ENCODE measurements at regions of chr17 and their contacts with region 1.

Region 1: GRCh38 chr17:51260125-51260880 is at the start of gene UTP18:
- DNase-seq: peak; percentile 98 to 99
- H3K4me3 ChIP-seq: peak within 1 kb of the TSS; percentile 87
- H3K4me3 Mint-ChIP-seq: peak within 1 kb of the TSS; percentile 66
- H3K27ac Mint-ChIP-seq: peak within 1 kb of the TSS; percentile 97
- H3K4me1 ChIP-seq: peaks cover 5% of the 10 kb centered on the region; the same call in 1 of the 2 replicates
- H3K4me1 Mint-ChIP-seq: peaks cover 29% of the 10 kb centered on the region
- H3K27me3 ChIP-seq: no peaks in the 10 kb centered on the region
- H3K27me3 Mint-ChIP-seq: no peaks in the 10 kb centered on the region
- CTCF ChIP-seq: no peak
- total RNA-seq, gene UTP18: 55.3 and 63.4 TPM in 2 replicates

Region 2: DNA sequence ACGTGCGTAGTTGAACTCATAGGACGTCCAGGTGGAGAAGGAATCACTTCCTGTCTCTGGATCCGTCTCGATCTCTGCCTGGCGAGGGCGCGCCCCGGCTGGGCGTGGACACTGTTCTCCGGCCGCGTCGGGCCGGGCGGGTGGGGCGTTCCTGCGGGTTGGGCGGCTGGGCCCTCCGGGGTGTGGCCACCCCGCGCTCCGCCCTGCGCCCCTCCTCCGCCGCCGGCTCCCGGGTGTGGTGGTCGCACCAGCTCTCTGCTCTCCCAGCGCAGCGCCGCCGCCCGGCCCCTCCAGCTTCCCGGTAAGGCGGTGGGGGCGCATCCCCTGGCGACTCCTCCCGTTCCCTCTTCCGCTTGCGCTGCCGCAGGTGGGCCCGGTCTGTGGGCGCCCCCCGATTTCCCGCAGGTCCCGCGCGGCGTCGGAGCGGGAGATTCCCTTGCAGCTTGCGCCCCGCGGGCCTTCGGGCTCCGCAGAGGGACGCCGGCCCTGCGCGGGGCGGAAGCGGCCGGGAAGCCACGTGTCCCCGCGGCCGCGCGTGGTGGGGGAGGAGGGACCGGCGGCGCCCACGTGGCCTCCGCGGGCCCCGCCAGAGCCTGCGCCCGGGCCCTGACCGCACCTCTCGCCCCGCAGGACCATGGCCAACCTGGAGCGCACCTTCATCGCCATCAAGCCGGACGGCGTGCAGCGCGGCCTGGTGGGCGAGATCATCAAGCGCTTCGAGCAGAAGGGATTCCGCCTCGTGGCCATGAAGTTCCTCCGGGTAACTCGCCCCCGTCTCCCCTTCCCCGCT is 93.9 kb before region 1 on chr17 and contains the start of gene NME2:
- CTCF ChIA-PET with region 1: interaction called, 5 read pairs
- POLR2A ChIA-PET with region 1: no interaction called
- intact Hi-C with region 1: loop called (anchors 2 kb)
- DNase-seq: peak; percentile 94 to 96
- H3K4me3 ChIP-seq: peak within 1 kb of the TSS; percentile 91
- H3K4me3 Mint-ChIP-seq: peak within 1 kb of the TSS; percentile 98
- H3K27ac Mint-ChIP-seq: peak within 1 kb of the TSS; percentile 97
- H3K4me1 ChIP-seq: peaks cover 21% of the 10 kb centered on the region
- H3K4me1 Mint-ChIP-seq: peaks cover 10% of the 10 kb centered on the region
- H3K27me3 ChIP-seq: no peaks in the 10 kb centered on the region
- H3K27me3 Mint-ChIP-seq: no peaks in the 10 kb centered on the region
- CTCF ChIP-seq: peak in 1 of 2 experiments; percentile 2
- total RNA-seq, gene NME2: 734 and 821 TPM in 2 replicates

Region 3: DNA sequence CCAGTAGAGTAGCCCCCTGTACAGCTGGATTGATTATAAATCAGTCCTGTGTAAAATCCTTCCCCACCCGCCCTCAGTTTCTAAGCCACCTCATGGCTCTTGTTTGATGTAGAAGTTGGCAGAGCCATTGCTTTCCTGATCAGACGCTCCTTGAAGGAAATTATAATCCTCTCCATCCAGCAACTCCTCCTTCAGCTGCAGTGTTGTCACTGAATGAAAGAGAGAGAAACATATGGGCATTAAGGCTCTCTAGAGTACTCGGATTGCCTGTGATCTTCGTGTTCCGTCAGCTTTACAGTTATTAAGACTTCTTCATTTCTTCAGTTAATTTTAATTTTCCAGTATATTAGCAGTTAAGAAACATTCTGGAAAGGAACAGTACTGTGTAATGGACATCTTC is 79.8 kb before region 1 on chr17:
- CTCF ChIA-PET with region 1: no interaction called
- POLR2A ChIA-PET with region 1: no interaction called
- intact Hi-C with region 1: no loop called
- DNase-seq: no peak
- H3K4me3 ChIP-seq: no peak overlapping the region
- H3K4me3 Mint-ChIP-seq: no peak overlapping the region
- H3K27ac Mint-ChIP-seq: no peak overlapping the region
- H3K4me1 ChIP-seq: no peaks in the 10 kb centered on the region
- H3K4me1 Mint-ChIP-seq: no peaks in the 10 kb centered on the region
- H3K27me3 ChIP-seq: no peaks in the 10 kb centered on the region
- H3K27me3 Mint-ChIP-seq: no peaks in the 10 kb centered on the region
- CTCF ChIP-seq: no peak